Activated naive CD4-positive, alpha-beta T cell treated with anti-CD3 and anti-CD28 coated beads for 36 hours (primary cell): ENCODE measurements at regions of chrX and their contacts with region 1.

Region 1: DNA sequence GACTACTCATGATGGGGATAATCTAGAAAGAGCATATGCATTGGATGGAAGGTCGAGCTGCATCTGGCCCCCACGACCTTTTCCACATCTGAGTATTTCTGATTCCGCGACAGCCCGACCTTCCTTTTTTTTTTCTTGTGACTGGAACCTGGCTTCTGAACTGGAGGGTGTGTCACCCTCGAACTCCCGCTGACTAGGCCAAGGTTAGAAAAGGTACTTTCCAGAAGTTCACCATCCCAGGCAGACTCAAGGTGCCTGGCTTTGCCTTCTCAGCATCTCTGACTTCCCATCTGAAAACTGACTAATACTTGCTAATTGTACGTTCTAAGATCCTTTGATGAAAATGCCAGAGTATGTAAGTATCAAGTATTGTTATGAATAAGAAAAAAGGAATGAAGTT is 49.3 kb upstream of the CD40LG start:
- DNase-seq: peak; percentile 61
- H3K4me3 Mint-ChIP-seq: peak overlapping the region; percentile 38
- H3K27ac Mint-ChIP-seq: peak overlapping the region; percentile 88
- H3K4me1 Mint-ChIP-seq: peaks cover 52% of the 10 kb centered on the region
- H3K27me3 Mint-ChIP-seq: no peaks in the 10 kb centered on the region

Region 2: GRCh38 chrX:136588041-136588788 is 10.4 kb before region 1 on chrX:
- CTCF ChIA-PET with region 1: interaction called, 11 read pairs
- intact Hi-C with region 1: loop called (anchors 1 kb)
- DNase-seq: peak; percentile 37
- H3K4me3 Mint-ChIP-seq: no peak overlapping the region
- H3K27ac Mint-ChIP-seq: peak overlapping the region; percentile 86
- H3K4me1 Mint-ChIP-seq: peaks cover 63% of the 10 kb centered on the region
- H3K27me3 Mint-ChIP-seq: no peaks in the 10 kb centered on the region

Region 3: GRCh38 chrX:136616987-136617685 is 18.5 kb after region 1 on chrX:
- CTCF ChIA-PET with region 1: no interaction called
- intact Hi-C with region 1: loop called (anchors 1 kb)
- DNase-seq: peak; percentile 54
- H3K4me3 Mint-ChIP-seq: peak overlapping the region; percentile 46
- H3K27ac Mint-ChIP-seq: peak overlapping the region; percentile 91
- H3K4me1 Mint-ChIP-seq: peaks cover 69% of the 10 kb centered on the region
- H3K27me3 Mint-ChIP-seq: no peaks in the 10 kb centered on the region

Region 4: DNA sequence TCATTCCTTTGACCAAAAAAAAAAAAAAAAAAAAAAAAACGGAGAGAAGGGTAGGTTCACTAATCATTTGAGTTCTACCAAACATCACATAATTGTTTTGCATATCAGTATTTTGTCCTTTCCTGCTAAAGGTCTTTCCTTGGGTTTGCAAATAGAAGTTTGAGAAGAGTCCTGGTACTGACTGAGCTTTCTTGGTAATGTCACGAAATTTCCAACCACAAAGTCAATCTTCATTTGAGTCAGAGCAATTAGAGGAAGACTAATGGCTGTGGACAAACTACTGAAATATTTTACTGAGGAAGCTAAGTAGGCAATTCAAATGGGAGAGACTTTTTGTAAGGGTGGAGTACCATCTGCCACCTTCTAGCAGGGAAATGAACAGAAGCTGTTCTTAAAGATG is 27.6 kb after region 1 on chrX:
- CTCF ChIA-PET with region 1: no interaction called
- intact Hi-C with region 1: loop called (anchors 1 kb)
- DNase-seq: no peak
- H3K4me3 Mint-ChIP-seq: peak overlapping the region; percentile 19
- H3K27ac Mint-ChIP-seq: peak overlapping the region; percentile 94
- H3K4me1 Mint-ChIP-seq: peaks cover 87% of the 10 kb centered on the region
- H3K27me3 Mint-ChIP-seq: no peaks in the 10 kb centered on the region

Region 5: GRCh38 chrX:136747003-136747986 is 148.7 kb after region 1 on chrX:
- CTCF ChIA-PET with region 1: no interaction called
- intact Hi-C with region 1: loop called (anchors 1 kb)
- DNase-seq: peak; percentile 62
- H3K4me3 Mint-ChIP-seq: peak overlapping the region; percentile 46
- H3K27ac Mint-ChIP-seq: peak overlapping the region; percentile 91
- H3K4me1 Mint-ChIP-seq: peaks cover 90% of the 10 kb centered on the region
- H3K27me3 Mint-ChIP-seq: no peaks in the 10 kb centered on the region

Region 6: GRCh38 chrX:136784231-136784630 is 185.6 kb after region 1 on chrX:
- CTCF ChIA-PET with region 1: no interaction called
- intact Hi-C with region 1: no loop called
- DNase-seq: no peak
- H3K4me3 Mint-ChIP-seq: no peak overlapping the region
- H3K27ac Mint-ChIP-seq: no peak overlapping the region
- H3K4me1 Mint-ChIP-seq: peaks cover 32% of the 10 kb centered on the region
- H3K27me3 Mint-ChIP-seq: no peaks in the 10 kb centered on the region